Mammary epithelial cell (primary cell): ENCODE measurements at regions of chr15 and their contacts with region 1.

Region 1: DNA sequence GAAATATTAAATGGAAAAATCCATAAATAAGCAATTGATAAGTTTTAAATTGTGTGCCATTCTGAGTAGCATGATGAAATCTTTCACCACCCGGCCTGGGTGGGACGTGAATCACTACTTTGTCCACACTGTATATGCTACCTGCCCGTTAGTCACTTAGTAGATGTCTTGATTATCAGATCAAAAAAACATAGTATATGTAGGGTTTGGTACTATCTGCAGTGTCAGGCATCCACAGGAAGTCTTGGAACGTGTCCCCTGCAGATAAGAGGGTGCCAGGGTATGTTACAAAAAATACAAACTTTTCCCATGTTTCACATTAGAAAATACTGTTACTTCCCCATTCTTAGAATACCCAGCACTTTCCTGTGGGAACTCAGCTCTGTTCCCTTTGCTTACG is 35.2 kb downstream of the FAM81A start:
- DNase-seq: no peak
- H3K4me3 ChIP-seq: no peak overlapping the region
- H3K27ac ChIP-seq: no peak overlapping the region
- H3K4me1 ChIP-seq: no peaks in the 10 kb centered on the region
- H3K27me3 ChIP-seq: no peaks in the 10 kb centered on the region
- CTCF ChIP-seq: no peak

Region 2: GRCh38 chr15:59160880-59161593 is 312.2 kb before region 1 on chr15:
- CTCF ChIA-PET with region 1: no interaction called
- dilution Hi-C with region 1: no loop called
- in situ Hi-C with region 1: no loop called
- intact Hi-C with region 1: no loop called
- DNase-seq: no peak
- H3K4me3 ChIP-seq: no peak overlapping the region
- H3K27ac ChIP-seq: no peak overlapping the region
- H3K4me1 ChIP-seq: peaks cover 16% of the 10 kb centered on the region
- H3K27me3 ChIP-seq: no peaks in the 10 kb centered on the region
- CTCF ChIP-seq: peak; percentile 34 to 49

Region 3: DNA sequence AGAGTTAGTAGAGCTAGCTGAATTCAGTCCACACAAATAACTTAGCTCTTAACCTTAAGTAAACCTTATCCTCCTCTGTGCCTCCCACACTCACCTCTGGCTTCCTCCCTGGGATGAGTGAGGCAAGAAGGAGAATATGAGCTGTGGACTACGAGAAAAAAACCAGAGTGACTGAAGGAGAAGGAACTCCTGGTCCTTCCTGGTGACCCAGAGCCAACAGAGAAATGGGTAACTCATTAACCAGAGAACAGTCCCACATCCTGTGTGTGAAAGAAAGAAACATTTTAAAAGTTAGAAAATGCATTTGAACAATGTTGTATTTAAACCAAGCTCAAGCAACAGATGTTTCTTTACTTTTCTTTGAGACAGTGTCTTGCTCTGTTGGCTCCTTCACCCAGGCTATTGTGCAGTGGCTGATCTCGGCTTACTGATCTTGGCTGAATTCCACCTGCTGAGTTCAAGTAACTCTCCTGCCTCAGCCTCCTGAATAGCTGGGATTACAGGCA is 62.8 kb before region 1 on chr15:
- CTCF ChIA-PET with region 1: no interaction called
- dilution Hi-C with region 1: loop called (anchors 10 kb)
- in situ Hi-C with region 1: no loop called
- intact Hi-C with region 1: no loop called
- DNase-seq: no peak
- H3K4me3 ChIP-seq: no peak overlapping the region
- H3K27ac ChIP-seq: no peak overlapping the region
- H3K4me1 ChIP-seq: no peaks in the 10 kb centered on the region
- H3K27me3 ChIP-seq: no peaks in the 10 kb centered on the region
- CTCF ChIP-seq: no peak

Region 4: GRCh38 chr15:59437817-59438562 is 35.2 kb before region 1 on chr15 and contains the start of gene FAM81A:
- CTCF ChIA-PET with region 1: no interaction called
- dilution Hi-C with region 1: no loop called
- in situ Hi-C with region 1: no loop called
- intact Hi-C with region 1: no loop called
- DNase-seq: peak; percentile 69
- H3K4me3 ChIP-seq: peak within 1 kb of the TSS; percentile 49 to 61 (median 58)
- H3K27ac ChIP-seq: no peak within 1 kb of the TSS
- H3K4me1 ChIP-seq: peaks cover 13% of the 10 kb centered on the region
- H3K27me3 ChIP-seq: peaks cover 3% of the 10 kb centered on the region
- CTCF ChIP-seq: no peak
- total RNA-seq, gene FAM81A: 0.33 to 2.9 TPM

Region 5: GRCh38 chr15:59711451-59712243 is 238.4 kb after region 1 on chr15:
- CTCF ChIA-PET with region 1: no interaction called
- dilution Hi-C with region 1: no loop called
- in situ Hi-C with region 1: no loop called
- intact Hi-C with region 1: no loop called
- DNase-seq: no peak
- H3K4me3 ChIP-seq: no peak overlapping the region
- H3K27ac ChIP-seq: no peak overlapping the region
- H3K4me1 ChIP-seq: no peaks in the 10 kb centered on the region
- H3K27me3 ChIP-seq: no peaks in the 10 kb centered on the region
- CTCF ChIP-seq: no peak